Astrocyte of the cerebellum (primary cell): ENCODE measurements at regions of chr4 and their contacts with region 1.

Region 1: GRCh38 chr4:65917486-65917885 is 247.2 kb upstream of the EPHA5 start:
- DNase-seq: no peak
- H3K4me3 ChIP-seq: no peak overlapping the region
- CTCF ChIP-seq: no peak

Region 2: DNA sequence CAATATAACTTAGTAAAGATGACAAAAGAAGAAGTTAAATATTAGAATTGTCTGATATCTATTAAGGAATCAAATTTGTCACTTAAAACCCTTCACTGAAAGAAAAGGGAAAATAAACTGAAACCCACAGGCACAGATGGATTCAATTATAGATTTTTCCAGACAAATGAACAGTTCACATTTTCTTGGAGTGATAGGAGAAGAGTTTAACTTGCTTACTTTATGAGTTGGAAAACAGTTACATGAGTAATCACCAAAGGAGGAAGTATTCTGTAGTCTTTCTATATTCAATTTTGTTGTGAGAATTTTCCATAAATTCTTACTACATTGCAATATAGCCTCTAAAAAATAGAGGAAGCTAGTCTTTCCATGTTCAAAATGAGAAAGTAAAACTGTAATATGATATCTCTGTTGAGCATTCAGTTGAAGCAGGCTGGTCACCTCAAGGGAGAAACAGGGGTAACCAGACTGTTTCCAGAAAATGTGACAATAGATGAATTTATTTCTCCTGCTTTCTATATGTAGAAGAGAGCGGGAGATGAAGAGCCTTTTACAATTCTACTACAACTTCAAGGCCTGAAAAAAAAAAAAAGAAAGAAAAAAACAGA is 83.1 kb after region 1 on chr4:
- in situ Hi-C with region 1: loop called (anchors 10 kb)
- DNase-seq: peak; percentile 49
- H3K4me3 ChIP-seq: no peak overlapping the region
- CTCF ChIP-seq: no peak